Aorta (tissue), 5 donors: ENCODE measurements at regions of chr5 and their contacts with region 1.

Region 1: DNA sequence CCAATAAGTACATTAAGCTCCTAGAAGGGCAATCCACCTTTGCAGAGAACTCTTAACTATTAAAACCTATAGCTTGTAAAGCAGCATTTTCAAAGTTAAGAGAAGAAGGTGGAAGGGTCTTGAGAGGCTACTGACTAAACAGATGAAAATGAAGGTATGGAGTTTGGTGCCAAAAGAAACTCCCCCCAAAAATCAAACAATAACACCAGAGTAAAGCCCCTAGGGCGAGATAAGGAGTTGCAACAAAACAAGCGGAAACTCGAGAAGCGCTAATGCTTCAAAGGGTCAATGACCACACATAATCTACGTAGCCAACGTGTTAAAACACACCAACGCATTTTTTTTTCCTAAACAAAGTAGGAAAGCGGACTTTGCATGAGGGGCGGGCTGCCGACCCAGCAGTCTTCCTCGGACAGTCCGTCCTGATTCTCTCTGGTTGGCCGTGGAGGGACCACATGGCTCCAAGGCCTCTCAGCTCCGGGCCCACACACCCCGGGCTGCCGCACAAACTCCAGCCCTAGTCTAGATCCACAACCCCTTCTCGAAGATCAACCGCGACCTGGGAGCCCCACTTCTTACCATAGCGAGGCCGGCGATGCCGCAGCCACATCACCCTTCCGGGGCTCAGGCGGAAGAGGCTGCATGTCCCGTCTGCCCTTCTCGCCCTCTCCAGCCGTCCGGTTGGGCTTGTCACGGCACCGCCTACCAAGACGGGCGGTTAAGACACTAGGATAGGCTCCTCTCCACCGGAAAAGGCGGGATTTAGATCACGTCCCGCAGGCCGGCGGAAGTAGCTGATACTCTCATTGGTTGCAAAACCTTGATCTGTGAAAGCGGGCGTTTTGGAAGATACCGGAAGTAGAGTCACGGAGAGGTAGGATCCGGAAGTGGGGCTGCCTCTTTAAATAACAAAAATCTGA is at the starts of genes TMEM167A and XRCC4:
- DNase-seq: peak; percentile 97 to 98
- ATAC-seq: peak; percentile 100
- H3K4me3 ChIP-seq: peak within 1 kb of the TSS; percentile 94 to 97
- H3K27ac ChIP-seq: peak within 1 kb of the TSS in 1 of 2 donors; percentile 90
- H3K4me1 ChIP-seq: peaks cover 4 to 5% of the 10 kb centered on the region in 2 donors
- H3K27me3 ChIP-seq: no peaks in the 10 kb centered on the region
- total RNA-seq, gene TMEM167A: 77.4 to 80.9 TPM
- total RNA-seq, gene XRCC4: 9.9 to 10.7 TPM

Region 2: DNA sequence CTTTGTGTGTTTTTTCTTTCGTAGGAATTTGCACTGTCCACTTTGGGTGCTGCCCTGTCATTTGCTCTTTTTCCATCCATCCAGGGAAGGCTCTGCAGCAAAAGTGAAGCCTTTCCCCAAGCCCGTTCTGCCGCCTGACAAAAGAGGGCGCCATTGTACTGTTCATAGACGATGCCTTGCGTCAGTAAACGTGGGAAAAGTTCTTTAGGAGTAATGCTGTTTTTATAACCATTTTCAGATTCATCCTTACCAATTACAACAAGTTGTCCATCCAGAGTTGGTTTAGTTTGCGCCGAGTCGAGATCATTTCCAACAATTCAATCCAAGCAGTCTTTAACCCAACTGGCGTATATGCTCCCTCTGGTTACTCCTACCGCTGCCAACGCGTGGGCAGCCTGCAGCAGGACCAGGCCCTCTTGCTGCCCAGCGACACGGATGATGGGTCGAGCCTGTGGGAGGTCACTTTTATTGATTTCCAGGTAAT is 764.6 kb before region 1 on chr5:
- intact Hi-C with region 1: loop called in 1 of 2 experiments (anchors 10 kb)
- DNase-seq: peak; percentile 75 to 87
- ATAC-seq: peak; percentile 88
- H3K4me3 ChIP-seq: peak overlapping the region; percentile 5 to 32
- H3K27ac ChIP-seq: peak overlapping the region; percentile 33 to 77
- H3K4me1 ChIP-seq: peaks cover under 1 to 4% of the 10 kb centered on the region in 2 donors
- H3K27me3 ChIP-seq: no peaks in the 10 kb centered on the region

Region 3: DNA sequence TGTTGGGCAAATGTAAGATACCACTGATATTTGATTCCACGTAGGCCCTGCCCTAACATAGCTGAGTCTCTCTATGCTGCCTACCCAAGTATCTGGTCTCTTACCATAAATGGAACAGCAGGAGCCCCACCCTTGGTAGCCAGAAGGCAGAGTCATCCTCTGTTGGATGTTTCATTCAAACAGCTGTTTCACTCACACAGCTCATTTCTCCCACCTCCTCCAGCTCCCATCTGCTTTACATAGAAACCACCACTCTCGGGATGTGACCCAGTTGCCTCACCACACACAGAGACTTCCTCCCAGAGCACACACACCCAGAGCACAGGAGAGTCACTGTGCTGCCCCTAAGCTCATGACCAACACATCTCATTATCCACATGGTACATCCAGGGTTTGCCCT is 165.1 kb before region 1 on chr5:
- intact Hi-C with region 1: no loop called
- DNase-seq: no peak
- ATAC-seq: no peak
- H3K4me3 ChIP-seq: no peak overlapping the region
- H3K27ac ChIP-seq: no peak overlapping the region
- H3K4me1 ChIP-seq: no peaks in the 10 kb centered on the region
- H3K27me3 ChIP-seq: no peaks in the 10 kb centered on the region

Region 4: DNA sequence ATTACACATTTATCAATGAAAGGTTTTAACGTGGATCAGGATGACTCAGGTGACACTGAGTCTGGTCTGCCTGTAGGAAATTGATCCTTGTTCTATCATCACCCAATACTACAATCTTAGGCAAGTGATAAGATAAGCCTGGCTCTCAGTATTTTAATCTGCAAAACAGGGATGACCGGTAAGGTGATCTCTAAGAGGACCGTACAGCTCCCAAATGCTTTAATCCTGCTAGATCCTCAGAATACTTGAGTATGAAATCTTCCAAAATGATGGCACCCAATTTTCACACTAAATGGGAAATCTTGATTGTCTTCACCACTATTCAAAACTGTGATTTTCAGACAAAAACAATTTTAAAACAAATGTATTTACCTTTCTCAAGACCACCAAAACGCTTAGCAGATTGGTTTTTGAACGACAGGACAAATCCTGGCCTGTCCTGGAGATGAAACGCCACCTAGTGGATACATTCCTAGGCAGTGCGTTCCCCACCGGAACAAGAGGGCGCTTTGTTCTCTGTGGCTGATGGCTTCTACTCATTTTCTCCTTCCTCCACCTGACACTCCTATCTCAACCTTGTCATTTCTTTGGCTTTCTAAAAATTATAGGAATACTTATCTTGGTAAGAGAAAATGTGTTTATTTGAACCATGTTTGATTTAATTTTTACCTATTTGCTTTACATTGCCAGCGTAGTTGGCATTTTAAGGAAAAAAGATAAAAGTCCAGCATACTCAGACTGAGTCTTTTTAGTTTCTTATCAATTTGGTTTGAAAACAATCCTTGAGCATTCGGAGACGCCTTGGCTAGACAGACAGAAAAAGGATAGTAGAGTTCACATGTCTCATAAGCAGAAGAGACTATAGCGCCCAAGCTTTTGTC is 353.4 kb after region 1 on chr5:
- intact Hi-C with region 1: loop called in 1 of 2 experiments (anchors 5 kb)
- DNase-seq: peak in 1 of 2 donors; percentile 57
- ATAC-seq: peak; percentile 73
- H3K4me3 ChIP-seq: no peak overlapping the region
- H3K27ac ChIP-seq: no peak overlapping the region
- H3K4me1 ChIP-seq: peaks cover 0 to 2% of the 10 kb centered on the region in 2 donors
- H3K27me3 ChIP-seq: no peaks in the 10 kb centered on the region